Naive thymus-derived CD4-positive, alpha-beta T cell (primary cell): ENCODE measurements at regions of chr2 and their contacts with region 1.

Region 1: GRCh38 chr2:197198890-197199289 is 111.7 kb downstream of the ANKRD44 start:
- DNase-seq: peak; percentile 56 to 98 (median 96)
- ATAC-seq: peak; percentile 94
- H3K4me3 ChIP-seq: peak overlapping the region; percentile 50
- H3K4me3 Mint-ChIP-seq: peak overlapping the region; percentile 83 to 100 (median 90)
- H3K27ac ChIP-seq: peak overlapping the region; percentile 81
- H3K27ac Mint-ChIP-seq: peak overlapping the region; percentile 93 to 100 (median 98)
- H3K4me1 ChIP-seq: peaks cover 75 to 83% of the 10 kb centered on the region in 2 donors
- H3K4me1 Mint-ChIP-seq: peaks cover 56 to 98% (median 86%) of the 10 kb centered on the region in 7 donors
- H3K27me3 ChIP-seq: no peaks in the 10 kb centered on the region
- H3K27me3 Mint-ChIP-seq: peaks cover 0 to 3% (median 0%) of the 10 kb centered on the region in 5 donors

Region 2: DNA sequence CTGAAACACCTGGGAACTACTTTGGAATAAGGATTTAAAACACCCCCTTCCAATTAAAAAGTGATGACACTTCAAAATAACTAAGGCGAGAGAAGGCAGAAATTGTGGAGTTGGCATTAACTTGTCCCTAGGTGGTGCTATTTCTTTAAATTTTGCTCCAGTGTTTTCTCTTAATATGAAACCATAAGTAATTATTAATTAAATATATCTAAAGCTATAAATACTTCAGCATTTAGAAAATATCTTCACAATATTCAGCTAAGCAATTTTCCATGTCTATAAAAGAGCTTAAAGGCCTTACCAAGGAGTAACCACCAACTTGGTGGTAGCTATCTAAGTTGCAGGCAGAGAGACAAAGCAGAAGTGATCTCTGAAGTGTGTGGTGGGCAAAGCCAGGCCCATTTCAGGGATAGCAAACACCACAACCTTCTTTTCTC is 85.6 kb before region 1 on chr2:
- CTCF ChIA-PET with region 1: interaction called, 12 read pairs
- POLR2A ChIA-PET with region 1: no interaction called
- intact Hi-C with region 1: no loop called
- DNase-seq: peak in 7 of 9 donors; percentile 22 to 58 (median 42)
- ATAC-seq: peak; percentile 70
- H3K4me3 ChIP-seq: no peak overlapping the region
- H3K4me3 Mint-ChIP-seq: no peak overlapping the region
- H3K27ac ChIP-seq: peak overlapping the region; percentile 1
- H3K27ac Mint-ChIP-seq: peak overlapping the region; percentile 36 to 95 (median 76)
- H3K4me1 ChIP-seq: peaks cover 0 to 13% of the 10 kb centered on the region in 2 donors
- H3K4me1 Mint-ChIP-seq: peaks cover 21 to 43% (median 38%) of the 10 kb centered on the region in 7 donors
- H3K27me3 ChIP-seq: no peaks in the 10 kb centered on the region
- H3K27me3 Mint-ChIP-seq: no peaks in the 10 kb centered on the region

Region 3: GRCh38 chr2:197216361-197216979 is 17.6 kb after region 1 on chr2:
- CTCF ChIA-PET with region 1: interaction called, 3 read pairs
- POLR2A ChIA-PET with region 1: interaction called, 254 read pairs
- intact Hi-C with region 1: no loop called
- DNase-seq: peak in 1 of 9 donors; percentile 54
- ATAC-seq: peak; percentile 43
- H3K4me3 ChIP-seq: peak overlapping the region; percentile 28
- H3K4me3 Mint-ChIP-seq: peak overlapping the region; percentile 63 to 86 (median 74)
- H3K27ac ChIP-seq: peak overlapping the region; percentile 60
- H3K27ac Mint-ChIP-seq: peak overlapping the region; percentile 79 to 100 (median 97)
- H3K4me1 ChIP-seq: peaks cover 76 to 81% of the 10 kb centered on the region in 2 donors
- H3K4me1 Mint-ChIP-seq: peaks cover 57 to 96% (median 89%) of the 10 kb centered on the region in 7 donors
- H3K27me3 ChIP-seq: no peaks in the 10 kb centered on the region
- H3K27me3 Mint-ChIP-seq: no peaks in the 10 kb centered on the region

Region 4: GRCh38 chr2:197248623-197249022 is 49.7 kb after region 1 on chr2:
- CTCF ChIA-PET with region 1: interaction called, 4 read pairs
- POLR2A ChIA-PET with region 1: interaction called, 41 read pairs
- intact Hi-C with region 1: no loop called
- DNase-seq: peak in 5 of 9 donors; percentile 36 to 50 (median 43)
- ATAC-seq: peak; percentile 73
- H3K4me3 ChIP-seq: peak overlapping the region; percentile 17
- H3K4me3 Mint-ChIP-seq: peak overlapping the region; percentile 35 to 78 (median 66)
- H3K27ac ChIP-seq: peak overlapping the region; percentile 49
- H3K27ac Mint-ChIP-seq: peak overlapping the region; percentile 43 to 94 (median 82)
- H3K4me1 ChIP-seq: peaks cover 56 to 77% of the 10 kb centered on the region in 2 donors
- H3K4me1 Mint-ChIP-seq: peaks cover 48 to 99% (median 89%) of the 10 kb centered on the region in 7 donors
- H3K27me3 ChIP-seq: no peaks in the 10 kb centered on the region
- H3K27me3 Mint-ChIP-seq: no peaks in the 10 kb centered on the region

Region 5: DNA sequence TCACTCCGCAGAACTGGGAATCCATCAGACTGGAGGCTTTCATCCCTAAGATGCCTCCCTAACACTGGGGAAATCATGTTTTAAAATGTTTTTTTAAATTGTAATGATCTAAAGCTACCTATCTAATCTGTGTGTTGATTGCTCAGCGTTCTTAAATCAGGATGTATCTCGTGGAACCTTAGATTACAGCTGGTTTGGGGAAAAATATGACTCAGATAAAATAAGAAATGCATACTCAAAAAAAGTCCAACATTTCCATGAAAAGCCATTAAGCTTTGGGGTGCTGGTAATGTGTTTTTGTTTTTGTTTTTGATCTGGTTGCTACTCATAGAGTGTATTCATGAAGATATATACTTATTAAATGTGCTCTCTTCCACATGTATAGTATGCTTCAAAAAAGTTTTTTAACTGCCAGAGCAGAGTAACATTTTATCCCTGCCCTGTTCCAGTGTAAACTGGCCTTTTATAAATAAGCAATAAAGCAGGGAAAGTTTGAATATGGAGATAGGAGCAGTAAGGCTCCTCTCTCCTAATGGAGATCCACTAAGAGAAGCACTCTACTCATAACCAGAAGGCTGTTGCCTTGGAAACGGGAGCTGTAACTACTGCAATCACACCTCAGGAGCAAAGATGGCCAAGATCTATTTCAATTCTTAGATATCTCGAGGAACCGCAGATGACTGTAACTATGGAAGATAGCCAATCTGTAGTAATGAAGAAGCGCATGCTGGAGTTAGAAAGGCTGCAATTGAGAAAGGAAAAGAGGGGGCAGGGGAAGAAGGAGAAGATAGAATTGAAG is 70.1 kb after region 1 on chr2:
- CTCF ChIA-PET with region 1: no interaction called
- POLR2A ChIA-PET with region 1: interaction called, 12 read pairs
- intact Hi-C with region 1: loop called in 1 of 2 experiments (anchors 1 kb)
- DNase-seq: peak in 2 of 9 donors; percentile 42 to 61
- ATAC-seq: peak; percentile 73
- H3K4me3 ChIP-seq: no peak overlapping the region
- H3K4me3 Mint-ChIP-seq: peak overlapping the region; percentile 1 to 85 (median 58)
- H3K27ac ChIP-seq: peak overlapping the region; percentile 63
- H3K27ac Mint-ChIP-seq: peak overlapping the region; percentile 76 to 96 (median 85)
- H3K4me1 ChIP-seq: peaks cover 76 to 82% of the 10 kb centered on the region in 2 donors
- H3K4me1 Mint-ChIP-seq: peaks cover 60 to 100% (median 92%) of the 10 kb centered on the region in 7 donors
- H3K27me3 ChIP-seq: no peaks in the 10 kb centered on the region
- H3K27me3 Mint-ChIP-seq: no peaks in the 10 kb centered on the region

Region 6: DNA sequence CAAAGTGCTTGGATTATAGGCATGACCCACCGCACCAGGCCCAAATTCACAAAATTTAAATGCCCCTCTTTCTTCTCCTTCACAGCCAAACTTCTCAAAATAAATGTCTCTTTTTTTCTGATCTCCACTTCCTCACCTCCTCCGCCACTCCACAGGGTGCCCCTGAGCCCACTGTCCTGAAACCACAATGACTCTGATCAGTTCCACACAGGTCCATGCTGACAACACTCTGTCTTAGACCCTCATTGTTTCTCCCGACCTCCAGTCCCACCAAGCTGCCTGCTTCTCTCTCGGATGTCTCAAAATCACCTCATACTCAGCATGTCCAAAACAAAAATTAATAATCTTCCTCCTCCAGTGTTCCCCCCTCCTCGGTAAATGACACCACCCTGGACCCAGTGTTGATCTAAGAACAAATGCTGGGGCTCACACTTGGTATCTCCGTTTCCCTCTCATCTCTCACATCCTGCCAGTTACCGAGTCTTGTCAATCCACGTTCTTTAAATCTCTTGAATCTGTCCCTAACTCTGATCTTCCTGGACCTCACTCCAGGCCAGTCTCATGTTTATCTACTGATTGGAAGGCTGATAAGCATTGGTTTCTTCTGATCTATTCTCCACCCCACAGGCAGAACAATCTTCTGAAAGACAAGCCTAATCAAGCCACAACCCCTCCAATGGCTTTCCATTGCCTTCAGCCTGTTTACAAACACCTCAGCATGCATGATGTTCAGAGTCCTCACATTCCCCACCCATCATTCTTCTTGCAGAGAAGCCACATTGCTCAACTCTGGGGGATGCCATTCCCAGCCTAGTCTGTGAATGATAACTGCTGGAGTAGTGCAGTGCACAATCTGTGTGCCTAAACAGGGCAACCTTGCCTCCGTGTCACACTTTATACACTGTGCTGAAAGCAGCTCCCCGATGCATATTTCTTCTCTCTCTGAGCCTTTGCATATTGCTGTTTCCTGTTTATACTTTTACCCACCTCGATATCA is 124.1 kb after region 1 on chr2:
- CTCF ChIA-PET with region 1: interaction called, 5 read pairs
- POLR2A ChIA-PET with region 1: interaction called, 14 read pairs
- intact Hi-C with region 1: no loop called
- DNase-seq: peak in 6 of 9 donors; percentile 43 to 65 (median 50)
- ATAC-seq: peak; percentile 76
- H3K4me3 ChIP-seq: peak overlapping the region; percentile 36
- H3K4me3 Mint-ChIP-seq: peak overlapping the region; percentile 68 to 88 (median 76)
- H3K27ac ChIP-seq: peak overlapping the region; percentile 73
- H3K27ac Mint-ChIP-seq: peak overlapping the region; percentile 96 to 99 (median 97)
- H3K4me1 ChIP-seq: peaks cover 33 to 59% of the 10 kb centered on the region in 2 donors
- H3K4me1 Mint-ChIP-seq: peaks cover 43 to 81% (median 71%) of the 10 kb centered on the region in 7 donors
- H3K27me3 ChIP-seq: no peaks in the 10 kb centered on the region
- H3K27me3 Mint-ChIP-seq: no peaks in the 10 kb centered on the region

Region 7: GRCh38 chr2:197453161-197453914 is 254.4 kb after region 1 on chr2 and contains the start of gene COQ10B:
- CTCF ChIA-PET with region 1: no interaction called
- POLR2A ChIA-PET with region 1: no interaction called
- intact Hi-C with region 1: loop called in 1 of 2 experiments (anchors 5 kb)
- DNase-seq: peak; percentile 87 to 99 (median 98)
- ATAC-seq: peak; percentile 92
- H3K4me3 ChIP-seq: peak within 1 kb of the TSS; percentile 92
- H3K4me3 Mint-ChIP-seq: peak within 1 kb of the TSS; percentile 92 to 100 (median 99)
- H3K27ac ChIP-seq: peak within 1 kb of the TSS; percentile 96
- H3K27ac Mint-ChIP-seq: peak within 1 kb of the TSS; percentile 97 to 100 (median 100)
- H3K4me1 ChIP-seq: peaks cover 16% of the 10 kb centered on the region in 2 donors
- H3K4me1 Mint-ChIP-seq: peaks cover 25 to 56% (median 47%) of the 10 kb centered on the region in 7 donors
- H3K27me3 ChIP-seq: no peaks in the 10 kb centered on the region
- H3K27me3 Mint-ChIP-seq: peaks cover 0 to 2% (median 0%) of the 10 kb centered on the region in 5 donors
- total RNA-seq, gene COQ10B: 22.9 to 57.2 (median 30.5) TPM